ENCODE measurements at regions of chr2 and their contacts with region 1.

Region 1: GRCh38 chr2:171852366-171852888 is 41.6 kb downstream of the SLC25A12 start:
- DNase-seq: no peak
- H3K27ac ChIP-seq: no peak overlapping the region
- CTCF ChIP-seq: no peak

Region 2: GRCh38 chr2:171652416-171652785 is 200.0 kb before region 1 on chr2:
- CTCF ChIA-PET with region 1: no interaction called
- POLR2A ChIA-PET with region 1: no interaction called
- DNase-seq: peak; percentile 5
- H3K27ac ChIP-seq: no peak overlapping the region
- CTCF ChIP-seq: no peak

Region 3: GRCh38 chr2:171811245-171811628 is 41.2 kb before region 1 on chr2:
- CTCF ChIA-PET with region 1: no interaction called
- POLR2A ChIA-PET with region 1: no interaction called
- DNase-seq: peak; percentile 26
- H3K27ac ChIP-seq: no peak overlapping the region
- CTCF ChIP-seq: peak; percentile 40

Region 4: GRCh38 chr2:171832489-171832888 is 19.9 kb before region 1 on chr2:
- CTCF ChIA-PET with region 1: no interaction called
- POLR2A ChIA-PET with region 1: interaction called, 10 read pairs
- DNase-seq: no peak
- H3K27ac ChIP-seq: no peak overlapping the region
- CTCF ChIP-seq: no peak